GM12878 (cell line): ENCODE measurements at regions of chr18 and their contacts with region 1.

Region 1: GRCh38 chr18:3273042-3273441 is 11.1 kb downstream of the MYL12B start:
- DNase-seq: no peak
- ATAC-seq: no peak
- H3K4me3 ChIP-seq: no peak overlapping the region
- H3K27ac ChIP-seq: no peak overlapping the region
- H3K4me1 ChIP-seq: peaks cover 12% of the 10 kb centered on the region
- H3K27me3 ChIP-seq: no peaks in the 10 kb centered on the region
- CTCF ChIP-seq: no peak
- EP300 ChIP-seq: no peak
- POLR2A ChIP-seq: no peak
- RAD21 ChIP-seq: no peak

Region 2: GRCh38 chr18:3261371-3262246 is 11.4 kb before region 1 on chr18 and contains the start of gene MYL12B:
- CTCF ChIA-PET with region 1: interaction called, 7 read pairs
- POLR2A ChIA-PET with region 1: interaction called, 6 read pairs
- RAD21 ChIA-PET with region 1: interaction called, 8 read pairs
- SMC1A ChIA-PET with region 1: interaction called, 41 read pairs
- in situ Hi-C with region 1: no loop called
- intact Hi-C with region 1: no loop called
- DNase-seq: no peak
- ATAC-seq: peak; percentile 80
- H3K4me3 ChIP-seq: peak within 1 kb of the TSS; percentile 84
- H3K27ac ChIP-seq: peak within 1 kb of the TSS; percentile 91
- H3K4me1 ChIP-seq: peaks cover 14% of the 10 kb centered on the region
- H3K27me3 ChIP-seq: no peaks in the 10 kb centered on the region
- CTCF ChIP-seq: no peak
- EP300 ChIP-seq: no peak
- POLR2A ChIP-seq: peak; percentile 95
- RAD21 ChIP-seq: no peak
- polyA plus RNA-seq, gene MYL12B: 662 to 739 TPM